ENCODE measurements at regions of chr9 and their contacts with region 1.

Region 1: GRCh38 chr9:76459691-76460635 is 981 bp downstream of the GCNT1 start:
- DNase-seq: no peak
- H3K4me3 ChIP-seq: peak overlapping the region; percentile 78 to 81
- H3K27ac ChIP-seq: peak overlapping the region; percentile 57
- H3K4me1 ChIP-seq: peaks cover 15% of the 10 kb centered on the region
- H3K27me3 ChIP-seq: no peaks in the 10 kb centered on the region
- CTCF ChIP-seq: peak in 1 of 3 experiments; percentile 14
- POLR2A ChIP-seq: no peak

Region 2: DNA sequence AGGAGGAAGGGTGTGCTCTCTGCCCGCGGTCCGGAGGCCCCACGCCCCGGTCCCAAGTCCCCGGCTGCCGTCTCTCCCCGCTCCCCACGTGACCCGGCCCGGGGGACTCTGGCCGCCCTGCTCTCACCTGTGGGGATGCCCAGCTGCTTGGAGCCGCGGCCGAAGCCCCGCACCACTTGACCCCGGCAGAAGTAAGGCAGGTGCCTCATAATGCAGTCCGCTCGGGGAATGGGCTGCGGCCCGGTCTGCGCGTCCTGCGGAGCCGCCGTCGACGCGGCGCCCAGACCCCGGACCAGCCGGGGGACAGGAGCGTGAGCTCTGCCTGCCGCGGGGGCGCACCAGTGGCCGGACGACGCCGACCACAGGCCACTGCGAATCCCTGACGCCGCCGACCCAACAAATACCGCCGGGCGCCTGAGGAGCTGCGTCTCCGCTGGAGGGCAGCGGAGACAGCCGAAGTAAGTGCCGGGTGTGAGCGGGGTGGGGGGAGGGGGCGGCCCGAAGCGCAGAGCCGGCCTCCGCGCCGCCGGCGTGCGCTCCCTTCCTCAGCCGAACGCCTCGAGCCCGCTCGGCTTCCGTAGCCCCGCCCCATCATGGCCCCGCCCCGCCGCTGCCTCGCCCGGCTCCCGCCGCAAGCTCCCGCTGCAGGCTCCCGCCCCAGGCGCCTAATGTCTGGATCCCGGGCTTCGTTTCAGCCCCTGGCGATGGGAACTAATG is 65.8 kb before region 1 on chr9 and contains the start of gene RFK:
- intact Hi-C with region 1: no loop called
- DNase-seq: peak in 1 of 2 donors; percentile 91
- H3K4me3 ChIP-seq: peak within 1 kb of the TSS; percentile 88 to 95
- H3K27ac ChIP-seq: peak within 1 kb of the TSS; percentile 89
- H3K4me1 ChIP-seq: peaks cover 25% of the 10 kb centered on the region
- H3K27me3 ChIP-seq: no peaks in the 10 kb centered on the region
- CTCF ChIP-seq: peak in 2 of 3 experiments; percentile 22 to 36
- POLR2A ChIP-seq: peak in 1 of 2 donors; percentile 27
- total RNA-seq, gene RFK: 16.7 TPM

Region 3: GRCh38 chr9:76516350-76516749 is 56.4 kb after region 1 on chr9:
- intact Hi-C with region 1: loop called (anchors 10 kb)
- DNase-seq: no peak
- H3K4me3 ChIP-seq: no peak overlapping the region
- H3K27ac ChIP-seq: no peak overlapping the region
- H3K4me1 ChIP-seq: no peaks in the 10 kb centered on the region
- H3K27me3 ChIP-seq: no peaks in the 10 kb centered on the region
- CTCF ChIP-seq: no peak
- POLR2A ChIP-seq: no peak

Region 4: GRCh38 chr9:77544546-77544945 is 1084.6 kb after region 1 on chr9:
- intact Hi-C with region 1: no loop called
- DNase-seq: no peak
- H3K4me3 ChIP-seq: no peak overlapping the region
- H3K27ac ChIP-seq: no peak overlapping the region
- H3K4me1 ChIP-seq: no peaks in the 10 kb centered on the region
- H3K27me3 ChIP-seq: no peaks in the 10 kb centered on the region
- CTCF ChIP-seq: no peak
- POLR2A ChIP-seq: no peak